ENCODE measurements at regions of chr7 and their contacts with region 1.

Region 1: GRCh38 chr7:66694286-66694685 is 46.2 kb upstream of the RABGEF1 start:
- DNase-seq: no peak
- H3K4me3 ChIP-seq: no peak overlapping the region
- H3K27ac ChIP-seq: no peak overlapping the region
- H3K4me1 ChIP-seq: no peaks in the 10 kb centered on the region
- H3K27me3 ChIP-seq: no peaks in the 10 kb centered on the region
- CTCF ChIP-seq: no peak
- POLR2A ChIP-seq: no peak

Region 2: DNA sequence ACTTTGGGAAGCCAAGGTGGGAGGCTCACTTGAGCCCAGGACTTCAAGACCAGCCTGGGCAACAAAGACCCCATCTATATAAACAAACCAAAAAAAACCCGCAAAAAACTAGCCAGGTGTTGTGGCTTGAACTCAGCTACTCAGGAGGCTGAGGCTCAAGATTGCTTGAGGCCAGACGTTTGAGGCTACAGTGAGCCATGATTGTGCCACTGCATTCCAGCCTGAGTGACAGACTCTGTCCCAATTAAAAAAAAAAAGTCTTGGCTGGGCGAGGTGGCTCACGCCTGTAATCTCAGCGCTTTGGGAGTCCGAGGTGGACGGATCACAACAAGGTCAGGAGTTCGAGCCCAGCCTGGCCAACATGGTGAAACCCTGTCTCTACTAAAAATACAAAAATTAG is 57.7 kb after region 1 on chr7:
- intact Hi-C with region 1: loop called (anchors 2 kb)
- DNase-seq: no peak
- H3K4me3 ChIP-seq: no peak overlapping the region
- H3K27ac ChIP-seq: no peak overlapping the region
- H3K4me1 ChIP-seq: no peaks in the 10 kb centered on the region
- H3K27me3 ChIP-seq: no peaks in the 10 kb centered on the region
- CTCF ChIP-seq: no peak
- POLR2A ChIP-seq: no peak

Measured in breast epithelium (tissue), 4 donors.